ENCODE measurements at regions of chr16 and their contacts with region 1.

Region 1: DNA sequence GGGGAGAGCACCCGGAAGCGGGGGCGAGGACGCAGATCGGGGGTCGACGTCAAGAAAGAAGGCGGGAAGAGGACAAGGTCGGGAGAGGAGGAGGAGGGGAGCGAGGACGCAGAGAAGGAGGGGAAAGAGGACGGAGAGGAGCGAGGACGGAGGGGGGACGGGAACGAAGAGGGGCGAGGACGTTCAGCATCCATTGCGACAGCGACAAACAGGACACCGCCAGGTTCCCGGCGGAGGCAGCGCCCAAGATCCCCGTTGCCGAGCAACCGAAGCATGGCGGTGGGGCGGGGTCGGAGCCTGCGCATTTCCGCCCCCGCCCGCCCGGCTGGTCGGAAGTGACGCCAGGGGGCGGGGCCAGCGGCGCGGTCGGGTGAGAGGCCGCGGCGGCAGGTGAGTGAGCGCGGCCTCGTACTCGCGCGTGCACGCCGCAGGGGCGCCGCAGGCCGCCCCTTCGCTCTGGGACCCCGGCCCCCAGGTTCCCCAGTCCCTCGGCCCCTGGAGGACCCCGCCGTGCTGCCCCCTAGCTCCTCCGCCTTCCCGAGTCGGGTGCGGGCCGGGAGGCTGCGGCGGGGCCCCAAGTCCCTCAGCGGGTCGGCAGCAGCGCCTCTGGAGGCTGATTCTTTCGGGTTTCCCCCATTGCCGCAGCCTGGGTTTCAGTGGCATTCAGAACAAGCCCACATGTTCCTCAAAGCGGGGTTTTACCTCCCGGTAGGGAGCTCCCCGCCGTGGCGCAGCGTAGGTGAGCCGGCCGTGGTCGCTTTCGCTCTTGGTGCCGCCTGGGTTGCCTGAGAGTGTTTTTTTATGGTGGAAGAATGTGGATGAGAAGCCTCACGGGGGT is at the start of gene FAM234A:
- DNase-seq: peak; percentile 96 to 98
- ATAC-seq: peak; percentile 81 to 93 (median 88)
- H3K4me3 ChIP-seq: peak within 1 kb of the TSS; percentile 71
- H3K4me3 Mint-ChIP-seq: peak within 1 kb of the TSS; percentile 97
- H3K27ac ChIP-seq: peak within 1 kb of the TSS; percentile 88
- H3K27ac Mint-ChIP-seq: peak within 1 kb of the TSS; percentile 95 to 100
- H3K4me1 ChIP-seq: peaks cover 21% of the 10 kb centered on the region
- H3K4me1 Mint-ChIP-seq: peaks cover 13 to 18% of the 10 kb centered on the region in 2 donors
- H3K27me3 ChIP-seq: no peaks in the 10 kb centered on the region
- H3K27me3 Mint-ChIP-seq: no peaks in the 10 kb centered on the region
- CTCF ChIP-seq: peak; percentile 63
- total RNA-seq, gene FAM234A: 32.4 to 42.6 (median 40.7) TPM

Region 2: DNA sequence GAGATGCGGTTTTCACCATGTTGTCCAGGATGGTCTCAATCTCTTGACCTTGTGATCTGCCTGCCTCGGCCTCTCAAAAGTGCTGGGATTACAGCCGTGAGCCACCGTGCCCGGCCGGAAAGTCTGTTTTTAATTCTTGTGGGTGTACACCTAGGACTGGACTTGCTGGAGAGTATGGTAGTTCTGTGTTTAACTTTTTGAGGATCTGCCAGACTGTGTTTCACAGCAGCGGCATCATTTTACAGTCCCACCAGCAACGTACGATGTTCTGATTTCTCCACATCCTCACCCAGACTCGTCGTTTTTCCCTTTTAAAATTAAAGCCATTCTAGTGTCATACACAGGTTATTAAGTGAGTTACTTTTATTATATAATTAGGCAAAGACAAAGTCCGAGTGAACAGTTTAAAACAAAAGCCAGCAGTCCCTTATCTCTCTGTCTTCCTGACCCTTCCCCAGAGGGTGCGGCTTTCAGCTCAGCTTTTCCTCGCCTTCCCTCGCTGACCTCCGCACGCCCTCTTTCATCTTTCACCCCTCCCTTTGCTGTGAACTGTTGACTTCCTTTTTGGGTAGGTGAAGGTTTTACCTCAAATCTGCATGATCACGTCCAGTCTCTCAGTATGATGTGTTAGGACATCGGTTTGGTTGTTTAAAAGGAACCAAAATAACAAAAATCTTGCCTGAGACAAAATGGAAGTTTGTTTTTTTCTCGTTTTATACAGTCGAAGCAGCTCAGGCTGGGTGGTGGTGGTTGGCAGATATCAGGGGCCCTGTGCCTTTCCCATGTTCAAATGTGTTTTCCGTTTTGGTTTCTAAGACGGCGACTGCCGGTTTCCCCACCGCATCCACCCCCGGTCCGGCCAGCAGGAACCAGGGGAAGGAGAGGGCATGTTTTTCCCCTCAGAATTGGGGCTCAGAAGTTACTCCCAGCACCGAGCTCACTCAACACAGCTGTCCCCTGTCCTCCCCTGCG is 18.0 kb after region 1 on chr16:
- intact Hi-C with region 1: loop called (anchors 2 kb)
- DNase-seq: peak in 1 of 2 donors; percentile 54
- ATAC-seq: peak; percentile 58 to 80 (median 77)
- H3K4me3 ChIP-seq: peak overlapping the region; percentile 28
- H3K4me3 Mint-ChIP-seq: peak overlapping the region; percentile 90
- H3K27ac ChIP-seq: peak overlapping the region; percentile 75
- H3K27ac Mint-ChIP-seq: peak overlapping the region; percentile 88 to 90
- H3K4me1 ChIP-seq: peaks cover 26% of the 10 kb centered on the region
- H3K4me1 Mint-ChIP-seq: peaks cover 9 to 36% of the 10 kb centered on the region in 2 donors
- H3K27me3 ChIP-seq: no peaks in the 10 kb centered on the region
- H3K27me3 Mint-ChIP-seq: no peaks in the 10 kb centered on the region
- CTCF ChIP-seq: no peak

Region 3: GRCh38 chr16:309476-309875 is 74.8 kb after region 1 on chr16:
- intact Hi-C with region 1: loop called (anchors 2 kb)
- DNase-seq: peak in 1 of 2 donors; percentile 61
- ATAC-seq: peak in 1 of 3 donors; percentile 25
- H3K4me3 ChIP-seq: no peak overlapping the region
- H3K4me3 Mint-ChIP-seq: peak overlapping the region; percentile 75
- H3K27ac ChIP-seq: no peak overlapping the region
- H3K27ac Mint-ChIP-seq: peak overlapping the region; percentile 81 to 89
- H3K4me1 ChIP-seq: peaks cover 60% of the 10 kb centered on the region
- H3K4me1 Mint-ChIP-seq: peaks cover 38 to 50% of the 10 kb centered on the region in 2 donors
- H3K27me3 ChIP-seq: no peaks in the 10 kb centered on the region
- H3K27me3 Mint-ChIP-seq: no peaks in the 10 kb centered on the region
- CTCF ChIP-seq: no peak

Region 4: DNA sequence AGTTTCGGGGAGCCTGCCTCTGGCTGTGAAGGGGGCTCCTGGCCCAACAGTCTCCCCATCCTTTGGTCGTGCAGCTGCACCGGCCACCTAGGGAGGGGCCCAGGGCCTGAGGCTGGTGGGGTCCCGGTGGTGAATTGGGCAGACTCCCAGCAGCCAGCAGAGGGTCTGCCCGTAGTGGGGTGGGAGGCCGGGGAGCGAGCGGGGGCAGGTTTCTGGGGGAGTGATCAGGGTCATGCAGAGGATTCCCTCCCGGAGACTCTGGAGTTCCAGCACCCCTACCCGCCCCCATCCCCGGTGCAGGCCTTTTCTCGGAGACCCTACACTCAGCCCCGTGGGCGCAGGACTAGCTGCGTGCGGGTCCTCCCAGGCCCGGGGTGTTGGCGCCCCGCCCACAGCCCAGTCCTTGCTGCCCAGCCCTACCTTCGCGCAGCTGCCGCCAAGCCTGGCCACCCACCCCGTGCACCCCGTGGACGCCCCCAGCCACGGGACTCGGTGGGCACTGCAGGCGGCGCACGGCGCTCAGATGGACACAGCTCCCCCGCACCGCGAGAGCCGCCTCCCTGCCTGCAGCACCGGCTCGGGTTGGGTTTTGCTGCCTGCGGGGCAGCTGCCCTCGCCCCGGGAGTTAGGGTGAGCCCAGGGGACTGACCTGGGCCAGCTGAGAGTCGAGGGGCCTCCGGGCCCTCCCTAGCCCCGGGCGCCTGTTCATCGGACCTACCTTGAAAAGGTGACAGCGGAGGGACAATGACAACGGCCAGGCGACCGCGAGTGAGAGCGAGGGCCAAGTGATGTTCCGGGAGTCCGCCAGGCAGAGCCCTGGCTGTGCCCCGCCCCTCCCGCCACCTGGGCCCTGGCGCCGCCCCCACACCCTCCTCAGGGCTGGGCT is 565.5 kb after region 1 on chr16 and contains the start of gene GNG13:
- intact Hi-C with region 1: no loop called
- DNase-seq: no peak
- ATAC-seq: peak in 1 of 3 donors; percentile 13
- H3K4me3 ChIP-seq: no peak within 1 kb of the TSS
- H3K4me3 Mint-ChIP-seq: no peak within 1 kb of the TSS
- H3K27ac ChIP-seq: no peak within 1 kb of the TSS
- H3K27ac Mint-ChIP-seq: no peak within 1 kb of the TSS
- H3K4me1 ChIP-seq: no peaks in the 10 kb centered on the region
- H3K4me1 Mint-ChIP-seq: no peaks in the 10 kb centered on the region
- H3K27me3 ChIP-seq: peaks cover 13% of the 10 kb centered on the region
- H3K27me3 Mint-ChIP-seq: peaks cover 0 to 3% of the 10 kb centered on the region in 2 donors
- CTCF ChIP-seq: no peak
- total RNA-seq, gene GNG13: not detected

Measured in natural killer cell (primary cell).